BJ (cell line): ENCODE measurements at regions of chr10 and their contacts with region 1.

Region 1: GRCh38 chr10:109866168-109866994 is 56.9 kb downstream of the XPNPEP1 start:
- DNase-seq: no peak
- H3K4me3 ChIP-seq: no peak overlapping the region
- H3K27me3 ChIP-seq: no peaks in the 10 kb centered on the region
- CTCF ChIP-seq: peak; percentile 24; the same call in 1 of the 2 replicates

Region 2: DNA sequence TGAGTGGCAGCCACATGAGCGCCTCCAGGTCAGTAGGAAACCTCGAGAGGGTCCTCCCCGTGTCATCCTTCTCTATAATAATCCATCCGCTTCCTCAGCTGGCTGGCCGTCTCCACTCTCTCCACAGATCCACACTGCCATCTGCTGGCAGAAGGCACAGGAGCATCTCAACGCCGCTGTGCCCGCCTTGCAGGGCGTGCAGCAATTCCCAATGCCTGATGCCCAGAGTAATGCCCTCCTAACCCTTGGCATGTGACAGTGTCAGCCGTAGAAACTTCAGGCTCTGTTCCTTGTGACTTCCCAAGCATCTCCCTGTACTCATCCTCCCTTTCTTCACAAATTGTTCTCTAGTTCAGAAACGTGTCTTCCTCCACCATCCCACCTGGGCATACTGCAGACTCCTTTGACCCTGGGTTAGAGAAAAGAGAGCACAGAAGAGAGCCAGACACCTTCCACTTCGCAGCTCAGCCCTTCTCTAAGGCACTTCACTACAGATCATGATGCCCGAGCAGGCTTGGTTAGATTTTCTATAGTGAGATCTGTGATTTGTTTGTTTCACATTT is 13.8 kb before region 1 on chr10:
- CTCF ChIA-PET with region 1: interaction called, 12 read pairs
- POLR2A ChIA-PET with region 1: no interaction called
- DNase-seq: peak; percentile 3
- H3K4me3 ChIP-seq: no peak overlapping the region
- H3K27me3 ChIP-seq: no peaks in the 10 kb centered on the region; the same call in 1 of the 2 replicates
- CTCF ChIP-seq: peak; percentile 95